ENCODE measurements at regions of chr13 and their contacts with region 1.

Region 1: GRCh38 chr13:94362411-94362909 is 117.0 kb downstream of the DCT start:
- DNase-seq: peak in 8 of 9 donors; percentile 52 to 75 (median 69)
- ATAC-seq: peak; percentile 93
- H3K4me3 ChIP-seq: no peak overlapping the region
- H3K4me3 Mint-ChIP-seq: no peak overlapping the region
- H3K27ac ChIP-seq: no peak overlapping the region
- H3K27ac Mint-ChIP-seq: no peak overlapping the region
- H3K4me1 ChIP-seq: no peaks in the 10 kb centered on the region
- H3K4me1 Mint-ChIP-seq: peaks cover 0 to 6% (median 0%) of the 10 kb centered on the region in 7 donors
- H3K27me3 ChIP-seq: no peaks in the 10 kb centered on the region
- H3K27me3 Mint-ChIP-seq: peaks cover 0 to 16% (median 5%) of the 10 kb centered on the region in 5 donors

Region 2: GRCh38 chr13:92896842-92897241 is 1465.6 kb before region 1 on chr13:
- CTCF ChIA-PET with region 1: no interaction called
- POLR2A ChIA-PET with region 1: no interaction called
- intact Hi-C with region 1: loop called in 1 of 2 experiments (anchors 2 kb)
- DNase-seq: no peak
- ATAC-seq: no peak
- H3K4me3 ChIP-seq: no peak overlapping the region
- H3K4me3 Mint-ChIP-seq: no peak overlapping the region
- H3K27ac ChIP-seq: no peak overlapping the region
- H3K27ac Mint-ChIP-seq: no peak overlapping the region
- H3K4me1 ChIP-seq: no peaks in the 10 kb centered on the region
- H3K4me1 Mint-ChIP-seq: no peaks in the 10 kb centered on the region
- H3K27me3 ChIP-seq: no peaks in the 10 kb centered on the region
- H3K27me3 Mint-ChIP-seq: no peaks in the 10 kb centered on the region

Region 3: GRCh38 chr13:93674337-93674755 is 688.1 kb before region 1 on chr13:
- CTCF ChIA-PET with region 1: interaction called, 3 read pairs
- POLR2A ChIA-PET with region 1: no interaction called
- intact Hi-C with region 1: loop called in 1 of 2 experiments (anchors 10 kb)
- DNase-seq: no peak
- ATAC-seq: no peak
- H3K4me3 ChIP-seq: no peak overlapping the region
- H3K4me3 Mint-ChIP-seq: no peak overlapping the region
- H3K27ac ChIP-seq: no peak overlapping the region
- H3K27ac Mint-ChIP-seq: no peak overlapping the region
- H3K4me1 ChIP-seq: no peaks in the 10 kb centered on the region
- H3K4me1 Mint-ChIP-seq: peaks cover 0 to 1% (median 0%) of the 10 kb centered on the region in 7 donors
- H3K27me3 ChIP-seq: no peaks in the 10 kb centered on the region
- H3K27me3 Mint-ChIP-seq: peaks cover 0 to 5% (median 0%) of the 10 kb centered on the region in 5 donors

Region 4: GRCh38 chr13:93926425-93926824 is 436.0 kb before region 1 on chr13:
- CTCF ChIA-PET with region 1: no interaction called
- POLR2A ChIA-PET with region 1: no interaction called
- intact Hi-C with region 1: loop called in 1 of 2 experiments (anchors 10 kb)
- DNase-seq: no peak
- ATAC-seq: no peak
- H3K4me3 ChIP-seq: no peak overlapping the region
- H3K4me3 Mint-ChIP-seq: no peak overlapping the region
- H3K27ac ChIP-seq: no peak overlapping the region
- H3K27ac Mint-ChIP-seq: no peak overlapping the region
- H3K4me1 ChIP-seq: no peaks in the 10 kb centered on the region
- H3K4me1 Mint-ChIP-seq: no peaks in the 10 kb centered on the region
- H3K27me3 ChIP-seq: no peaks in the 10 kb centered on the region
- H3K27me3 Mint-ChIP-seq: peaks cover 0 to 24% (median 14%) of the 10 kb centered on the region in 5 donors

Region 5: GRCh38 chr13:94112227-94112626 is 250.2 kb before region 1 on chr13:
- CTCF ChIA-PET with region 1: interaction called, 3 read pairs
- POLR2A ChIA-PET with region 1: no interaction called
- intact Hi-C with region 1: loop called (anchors 5 to 10 kb)
- DNase-seq: no peak
- ATAC-seq: no peak
- H3K4me3 ChIP-seq: no peak overlapping the region
- H3K4me3 Mint-ChIP-seq: no peak overlapping the region
- H3K27ac ChIP-seq: no peak overlapping the region
- H3K27ac Mint-ChIP-seq: no peak overlapping the region
- H3K4me1 ChIP-seq: no peaks in the 10 kb centered on the region
- H3K4me1 Mint-ChIP-seq: peaks cover 0 to 2% (median 0%) of the 10 kb centered on the region in 7 donors
- H3K27me3 ChIP-seq: no peaks in the 10 kb centered on the region
- H3K27me3 Mint-ChIP-seq: peaks cover 0 to 4% (median 4%) of the 10 kb centered on the region in 5 donors

Region 6: DNA sequence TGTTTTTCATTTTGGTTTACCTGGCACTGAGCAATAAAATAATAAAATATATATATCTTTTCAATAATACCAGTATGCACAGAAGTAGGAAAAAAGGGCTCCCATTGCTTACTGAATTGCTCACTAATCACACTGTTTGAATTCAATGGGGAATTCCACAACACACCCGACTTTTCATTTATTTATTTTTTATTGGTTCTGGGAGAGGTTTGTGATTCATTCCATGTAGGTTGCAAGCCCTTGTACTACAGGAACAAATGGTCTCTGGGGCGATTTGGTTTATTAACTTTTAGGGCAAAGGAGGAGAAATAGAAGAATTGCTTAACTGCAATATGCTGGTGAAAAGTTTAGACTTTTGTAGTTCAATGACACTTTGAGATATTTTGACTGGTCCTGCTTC is 90.4 kb before region 1 on chr13:
- CTCF ChIA-PET with region 1: no interaction called
- POLR2A ChIA-PET with region 1: no interaction called
- intact Hi-C with region 1: loop called in 1 of 2 experiments (anchors 5 kb)
- DNase-seq: no peak
- ATAC-seq: no peak
- H3K4me3 ChIP-seq: no peak overlapping the region
- H3K4me3 Mint-ChIP-seq: no peak overlapping the region
- H3K27ac ChIP-seq: no peak overlapping the region
- H3K27ac Mint-ChIP-seq: no peak overlapping the region
- H3K4me1 ChIP-seq: no peaks in the 10 kb centered on the region
- H3K4me1 Mint-ChIP-seq: peaks cover 0 to 7% (median 0%) of the 10 kb centered on the region in 7 donors
- H3K27me3 ChIP-seq: no peaks in the 10 kb centered on the region
- H3K27me3 Mint-ChIP-seq: no peaks in the 10 kb centered on the region

Region 7: DNA sequence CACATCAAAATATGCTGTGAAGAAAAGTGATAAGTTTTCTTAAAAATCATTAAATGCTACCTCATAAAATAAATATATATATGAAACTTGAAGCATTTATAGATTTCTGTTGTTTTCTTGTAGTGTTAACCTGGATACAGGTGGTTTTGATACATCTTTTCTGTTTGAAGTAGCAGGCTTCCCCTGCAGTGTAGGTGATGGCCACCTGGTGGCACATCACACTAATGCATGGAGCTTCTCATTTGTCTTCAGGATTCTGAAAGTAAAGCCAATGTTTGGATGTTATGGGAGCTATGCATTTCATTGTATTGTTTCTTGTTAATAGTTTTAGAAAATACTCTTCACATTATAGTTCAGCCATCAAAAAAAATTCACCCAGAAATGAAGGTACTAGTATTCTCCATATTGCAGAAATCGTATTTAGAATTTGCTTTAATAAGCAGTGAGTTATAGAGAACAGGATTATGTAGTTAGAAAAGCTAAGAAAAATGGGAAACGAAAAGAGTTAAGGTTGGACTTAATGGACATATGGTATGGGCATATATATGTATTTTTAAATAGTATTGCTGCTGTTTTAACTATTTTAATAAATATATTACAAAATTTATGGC is 257.9 kb after region 1 on chr13:
- CTCF ChIA-PET with region 1: interaction called, 6 read pairs
- POLR2A ChIA-PET with region 1: no interaction called
- intact Hi-C with region 1: loop called (anchors 1 to 2 kb)
- DNase-seq: peak in 3 of 9 donors; percentile 19 to 32 (median 26)
- ATAC-seq: peak; percentile 73
- H3K4me3 ChIP-seq: no peak overlapping the region
- H3K4me3 Mint-ChIP-seq: no peak overlapping the region
- H3K27ac ChIP-seq: no peak overlapping the region
- H3K27ac Mint-ChIP-seq: peak overlapping the region in 1 of 9 donors; percentile 8
- H3K4me1 ChIP-seq: no peaks in the 10 kb centered on the region
- H3K4me1 Mint-ChIP-seq: peaks cover 0 to 16% (median 13%) of the 10 kb centered on the region in 7 donors
- H3K27me3 ChIP-seq: no peaks in the 10 kb centered on the region
- H3K27me3 Mint-ChIP-seq: no peaks in the 10 kb centered on the region

Measured in naive thymus-derived CD4-positive, alpha-beta T cell (primary cell).